Activated T-helper 1 cell treated with anti-CD3 and anti-CD28 coated beads, Interleukin-12 subunit alpha, Interleukin-12 subunit beta, Interleukin-2, Interleukin-4 antibody, amounts not matched to agents 30 ng/mL and 10 ng/mL and 1 ng/mL, durations not matched to agents 14 hours and 24 hours and 36 hours (primary cell): ENCODE measurements at regions of chr9 and their contacts with region 1.

Region 1: DNA sequence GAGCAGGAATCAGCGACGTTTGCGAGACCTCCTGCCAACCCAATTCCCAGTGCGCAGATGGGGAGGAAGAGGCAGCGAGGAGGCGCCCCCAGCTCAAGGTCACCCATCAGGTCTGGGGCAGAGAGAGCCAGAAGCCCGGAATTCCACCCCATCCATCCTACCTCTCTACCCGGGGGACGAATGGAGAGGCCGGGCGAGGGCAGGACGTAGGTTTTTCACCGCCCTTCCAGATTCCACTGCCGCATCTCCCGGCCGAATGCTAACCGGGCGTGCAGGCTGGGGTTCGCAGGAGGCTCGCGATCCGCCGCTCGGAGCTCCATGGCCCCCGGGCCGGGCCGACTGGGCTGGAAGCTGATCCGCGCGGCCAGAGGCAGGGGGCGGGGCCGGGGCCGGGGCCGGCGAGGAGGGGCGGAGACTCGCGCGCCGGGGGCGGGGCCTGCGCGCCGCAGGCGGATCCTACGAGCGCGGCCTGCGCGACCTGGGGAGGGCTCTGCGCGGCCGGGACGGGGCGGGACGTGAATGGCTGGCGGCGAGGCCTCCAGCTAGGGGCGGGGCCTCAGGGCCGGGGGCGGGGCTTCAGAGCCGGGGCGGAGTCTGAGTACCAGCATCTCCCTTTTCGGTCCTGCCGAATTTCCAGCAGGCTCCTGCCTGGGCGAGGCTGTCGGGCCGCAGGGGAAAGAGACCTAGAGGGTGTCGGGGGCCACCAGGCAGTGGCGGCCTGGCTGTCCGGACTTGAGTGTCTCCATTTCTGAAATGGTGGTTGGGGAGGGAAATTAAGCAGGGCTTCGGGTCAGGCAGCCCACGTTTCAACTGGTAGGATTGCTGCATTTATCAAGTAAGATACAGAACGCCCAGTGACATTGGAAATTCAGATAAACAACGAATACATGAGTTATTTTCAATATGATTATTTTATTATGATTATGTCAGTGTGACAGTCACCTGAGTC is at the start of gene ST6GALNAC4:
- DNase-seq: peak; percentile 91
- H3K4me3 Mint-ChIP-seq: peak within 1 kb of the TSS; percentile 84
- H3K27ac Mint-ChIP-seq: peak within 1 kb of the TSS; percentile 89
- H3K4me1 Mint-ChIP-seq: peaks cover 57% of the 10 kb centered on the region
- H3K27me3 Mint-ChIP-seq: peaks cover 3% of the 10 kb centered on the region
- total RNA-seq, gene ST6GALNAC4: 30.8 and 31.6 TPM in 2 replicates

Region 2: GRCh38 chr9:127503947-127504782 is 412.8 kb before region 1 on chr9:
- intact Hi-C with region 1: loop called (anchors 2 kb)
- DNase-seq: peak; percentile 70
- H3K4me3 Mint-ChIP-seq: no peak overlapping the region
- H3K27ac Mint-ChIP-seq: no peak overlapping the region
- H3K4me1 Mint-ChIP-seq: peaks cover 5% of the 10 kb centered on the region
- H3K27me3 Mint-ChIP-seq: no peaks in the 10 kb centered on the region

Region 3: DNA sequence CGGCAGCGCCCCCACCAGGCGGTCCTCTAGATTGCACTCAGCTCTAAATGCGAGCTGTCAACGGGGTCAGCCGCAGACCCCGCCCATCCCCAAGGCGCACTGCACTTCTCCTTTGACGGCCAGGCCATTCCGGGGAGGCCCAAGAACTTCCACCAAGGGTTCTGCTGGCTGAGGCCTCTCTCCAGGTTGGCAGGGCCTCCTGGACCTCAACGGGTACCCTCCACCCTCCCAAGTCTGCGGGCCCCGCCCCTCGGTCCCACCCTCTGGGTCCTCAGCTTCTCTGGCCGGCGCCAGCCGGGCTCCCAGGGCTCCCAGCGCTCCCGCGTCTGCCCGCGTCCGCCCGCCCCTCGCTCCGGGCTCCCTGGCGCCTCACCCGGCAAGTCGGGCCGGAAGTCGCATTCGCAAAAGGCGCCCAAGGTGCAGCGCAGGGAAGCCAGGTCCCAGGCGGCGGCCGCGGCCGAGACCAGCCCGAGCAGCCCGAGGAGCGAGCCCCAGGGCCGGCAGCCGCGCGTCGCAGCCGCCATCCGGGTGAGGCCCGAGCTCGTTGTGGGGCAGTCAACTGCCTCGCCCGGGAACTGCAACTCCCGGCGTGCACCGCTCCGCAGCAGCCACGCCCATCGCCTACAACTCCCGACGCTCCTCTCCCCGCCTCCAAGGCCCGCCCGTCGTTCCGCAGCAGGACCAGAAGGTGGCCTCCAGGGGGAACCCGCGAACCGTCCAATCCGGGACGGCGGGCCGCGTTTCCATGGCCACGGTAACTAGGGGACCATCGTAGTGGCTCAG is 182.0 kb before region 1 on chr9 and contains the start of gene TOR2A:
- intact Hi-C with region 1: loop called (anchors 1 kb)
- DNase-seq: peak; percentile 98
- H3K4me3 Mint-ChIP-seq: peak within 1 kb of the TSS; percentile 89
- H3K27ac Mint-ChIP-seq: peak within 1 kb of the TSS; percentile 96
- H3K4me1 Mint-ChIP-seq: peaks cover 15% of the 10 kb centered on the region
- H3K27me3 Mint-ChIP-seq: no peaks in the 10 kb centered on the region
- total RNA-seq, gene TOR2A: 16.6 and 18.9 TPM in 2 replicates

Region 4: GRCh38 chr9:127802576-127803443 is 114.1 kb before region 1 on chr9 and contains the start of gene FPGS:
- intact Hi-C with region 1: loop called (anchors 2 kb)
- DNase-seq: peak; percentile 74
- H3K4me3 Mint-ChIP-seq: peak within 1 kb of the TSS; percentile 97
- H3K27ac Mint-ChIP-seq: peak within 1 kb of the TSS; percentile 93
- H3K4me1 Mint-ChIP-seq: peaks cover 17% of the 10 kb centered on the region
- H3K27me3 Mint-ChIP-seq: no peaks in the 10 kb centered on the region
- total RNA-seq, gene FPGS: 128 and 130 TPM in 2 replicates

Region 5: GRCh38 chr9:127903557-127904475 is 13.1 kb before region 1 on chr9:
- intact Hi-C with region 1: loop called (anchors 1 kb)
- DNase-seq: peak; percentile 83
- H3K4me3 Mint-ChIP-seq: peak overlapping the region; percentile 93
- H3K27ac Mint-ChIP-seq: peak overlapping the region; percentile 100
- H3K4me1 Mint-ChIP-seq: peaks cover 47% of the 10 kb centered on the region
- H3K27me3 Mint-ChIP-seq: no peaks in the 10 kb centered on the region